ENCODE measurements at regions of chr11 and their contacts with region 1.

Region 1: GRCh38 chr11:4187055-4187988 is 92.7 kb downstream of the RRM1 start:
- DNase-seq: peak; percentile 84 to 94 (median 90)
- H3K4me3 ChIP-seq: peak overlapping the region in 3 of 4 donors; percentile 0 to 64 (median 56)
- H3K27ac ChIP-seq: peak overlapping the region in 1 of 5 donors; percentile 48
- H3K4me1 ChIP-seq: peaks cover 0 to 18% of the 10 kb centered on the region in 2 donors
- H3K27me3 ChIP-seq: no peaks in the 10 kb centered on the region
- CTCF ChIP-seq: peak; percentile 71 to 98 (median 94)
- POLR2A ChIP-seq: no peak

Region 2: GRCh38 chr11:4118107-4118506 is 69.2 kb before region 1 on chr11:
- intact Hi-C with region 1: no loop called
- DNase-seq: no peak
- H3K4me3 ChIP-seq: no peak overlapping the region
- H3K27ac ChIP-seq: no peak overlapping the region
- H3K4me1 ChIP-seq: peaks cover 0 to 7% of the 10 kb centered on the region in 2 donors
- H3K27me3 ChIP-seq: no peaks in the 10 kb centered on the region
- CTCF ChIP-seq: no peak
- POLR2A ChIP-seq: no peak

Region 3: DNA sequence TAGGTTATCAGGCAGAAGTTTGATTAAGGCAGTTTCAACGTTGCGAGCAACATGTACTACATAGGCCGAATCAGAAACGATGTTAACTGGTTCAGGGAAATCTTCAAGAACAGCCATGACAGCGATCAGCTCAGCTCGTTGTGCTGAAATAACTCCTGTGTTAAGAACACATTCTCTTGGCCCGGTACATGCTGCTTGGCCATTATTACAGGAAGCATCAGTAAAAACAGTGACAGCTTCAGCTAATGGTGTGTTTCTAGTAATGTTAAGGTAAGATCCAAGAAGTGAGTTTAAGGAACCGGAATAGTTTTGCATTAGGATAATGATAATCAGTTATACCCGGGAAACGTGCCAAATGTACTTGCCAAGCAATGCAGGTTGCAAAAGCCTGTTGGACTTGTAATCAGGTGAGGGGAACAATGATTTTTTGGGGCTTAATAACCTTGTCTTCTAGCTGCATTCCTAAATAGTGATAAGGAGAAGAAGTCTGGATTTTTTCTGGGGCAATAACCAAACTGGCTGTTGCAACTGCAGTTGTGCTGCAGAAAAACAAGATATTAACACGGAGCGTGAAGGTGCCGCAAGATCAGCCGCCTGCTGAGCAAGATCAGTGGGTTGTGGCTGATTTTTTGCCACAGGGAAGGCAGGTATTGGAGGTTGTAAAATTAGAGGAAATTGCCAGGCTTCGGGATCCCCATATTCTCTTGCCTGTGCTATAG is 309.4 kb after region 1 on chr11:
- intact Hi-C with region 1: loop called (anchors 2 to 10 kb)
- DNase-seq: peak in 1 of 7 donors; percentile 17
- H3K4me3 ChIP-seq: no peak overlapping the region
- H3K27ac ChIP-seq: no peak overlapping the region
- H3K4me1 ChIP-seq: no peaks in the 10 kb centered on the region
- H3K27me3 ChIP-seq: no peaks in the 10 kb centered on the region
- CTCF ChIP-seq: no peak
- POLR2A ChIP-seq: no peak

Region 4: DNA sequence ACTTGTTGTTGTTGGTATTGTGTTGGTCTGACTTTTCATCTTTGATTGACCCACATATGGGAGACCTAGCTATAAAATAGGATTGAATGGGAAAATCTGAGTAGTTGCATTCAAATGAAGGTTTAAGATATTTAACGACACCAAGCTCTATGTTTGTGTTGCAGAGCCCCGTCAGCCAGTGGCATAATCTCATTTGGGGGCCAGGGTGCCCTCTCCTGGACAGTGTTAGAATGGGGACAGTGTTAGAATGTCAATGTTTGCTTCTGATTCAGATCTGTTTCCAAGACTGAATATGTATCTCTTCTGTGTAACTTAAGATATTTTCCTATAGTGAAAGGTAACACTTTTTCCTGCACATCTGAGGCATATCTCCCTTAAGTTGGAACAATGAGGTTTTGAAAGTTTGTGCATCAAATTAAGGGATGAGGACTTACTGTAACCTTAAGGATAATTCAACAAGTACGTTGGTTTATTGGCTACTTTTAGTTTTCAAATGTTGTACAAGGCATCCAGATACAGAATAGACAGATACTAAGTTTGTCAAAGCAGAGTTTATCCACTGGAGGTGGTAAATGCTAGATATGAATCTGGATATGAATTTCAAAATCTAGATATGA is 352.4 kb after region 1 on chr11:
- intact Hi-C with region 1: loop called in 1 of 2 experiments (anchors 5 kb)
- DNase-seq: peak; percentile 39 to 80 (median 57)
- H3K4me3 ChIP-seq: no peak overlapping the region
- H3K27ac ChIP-seq: no peak overlapping the region
- H3K4me1 ChIP-seq: no peaks in the 10 kb centered on the region
- H3K27me3 ChIP-seq: no peaks in the 10 kb centered on the region
- CTCF ChIP-seq: peak; percentile 56 to 82 (median 66)
- POLR2A ChIP-seq: no peak

Region 5: GRCh38 chr11:4546878-4547277 is 359.6 kb after region 1 on chr11:
- intact Hi-C with region 1: loop called (anchors 5 kb)
- DNase-seq: no peak
- H3K4me3 ChIP-seq: no peak overlapping the region
- H3K27ac ChIP-seq: no peak overlapping the region
- H3K4me1 ChIP-seq: no peaks in the 10 kb centered on the region
- H3K27me3 ChIP-seq: no peaks in the 10 kb centered on the region
- CTCF ChIP-seq: no peak
- POLR2A ChIP-seq: no peak

Region 6: DNA sequence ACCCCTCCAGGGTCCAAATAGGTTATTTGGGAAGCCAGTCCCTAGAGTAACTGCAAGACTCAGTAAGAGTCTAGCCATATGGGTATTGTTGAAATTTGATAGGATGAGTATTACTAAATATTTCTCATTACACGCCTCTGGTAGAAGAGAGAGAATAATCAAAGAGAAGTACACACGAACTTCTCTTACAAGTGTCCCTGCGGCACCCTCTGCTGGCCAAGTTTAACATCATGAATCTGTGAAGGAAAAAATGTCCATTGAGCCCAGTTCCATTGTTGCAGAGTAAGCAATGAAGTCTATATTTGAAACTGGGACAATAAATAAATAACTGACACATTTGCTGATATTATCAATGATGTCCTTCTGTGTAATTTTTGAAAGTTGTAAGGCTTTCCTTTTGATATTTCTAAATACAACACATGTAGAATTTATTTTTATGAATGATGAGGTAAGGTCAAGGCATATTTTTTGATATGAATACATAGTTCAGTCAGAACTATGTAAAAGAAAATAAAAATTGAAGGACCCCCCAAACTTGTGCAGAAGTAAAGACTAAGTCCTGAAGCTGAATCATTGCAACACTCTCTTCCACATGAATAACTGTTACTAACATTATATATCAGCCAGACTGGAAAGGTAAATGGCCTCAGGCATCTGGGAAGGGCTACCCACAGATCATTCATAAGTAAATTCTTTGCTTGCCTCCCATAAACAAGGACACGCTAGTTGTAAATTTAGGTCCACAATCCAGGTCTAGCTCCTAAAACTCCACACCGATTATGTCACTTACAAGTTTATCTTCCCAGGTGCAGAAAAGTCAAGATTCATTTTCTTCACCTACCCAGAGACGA is 817.3 kb after region 1 on chr11:
- intact Hi-C with region 1: loop called in 1 of 2 experiments (anchors 10 kb)
- DNase-seq: peak; percentile 34 to 75 (median 60)
- H3K4me3 ChIP-seq: no peak overlapping the region
- H3K27ac ChIP-seq: no peak overlapping the region
- H3K4me1 ChIP-seq: no peaks in the 10 kb centered on the region
- H3K27me3 ChIP-seq: no peaks in the 10 kb centered on the region
- CTCF ChIP-seq: peak; percentile 36 to 56 (median 48)
- POLR2A ChIP-seq: no peak